ENCODE measurements at regions of chr12 and their contacts with region 1.

Region 1: DNA sequence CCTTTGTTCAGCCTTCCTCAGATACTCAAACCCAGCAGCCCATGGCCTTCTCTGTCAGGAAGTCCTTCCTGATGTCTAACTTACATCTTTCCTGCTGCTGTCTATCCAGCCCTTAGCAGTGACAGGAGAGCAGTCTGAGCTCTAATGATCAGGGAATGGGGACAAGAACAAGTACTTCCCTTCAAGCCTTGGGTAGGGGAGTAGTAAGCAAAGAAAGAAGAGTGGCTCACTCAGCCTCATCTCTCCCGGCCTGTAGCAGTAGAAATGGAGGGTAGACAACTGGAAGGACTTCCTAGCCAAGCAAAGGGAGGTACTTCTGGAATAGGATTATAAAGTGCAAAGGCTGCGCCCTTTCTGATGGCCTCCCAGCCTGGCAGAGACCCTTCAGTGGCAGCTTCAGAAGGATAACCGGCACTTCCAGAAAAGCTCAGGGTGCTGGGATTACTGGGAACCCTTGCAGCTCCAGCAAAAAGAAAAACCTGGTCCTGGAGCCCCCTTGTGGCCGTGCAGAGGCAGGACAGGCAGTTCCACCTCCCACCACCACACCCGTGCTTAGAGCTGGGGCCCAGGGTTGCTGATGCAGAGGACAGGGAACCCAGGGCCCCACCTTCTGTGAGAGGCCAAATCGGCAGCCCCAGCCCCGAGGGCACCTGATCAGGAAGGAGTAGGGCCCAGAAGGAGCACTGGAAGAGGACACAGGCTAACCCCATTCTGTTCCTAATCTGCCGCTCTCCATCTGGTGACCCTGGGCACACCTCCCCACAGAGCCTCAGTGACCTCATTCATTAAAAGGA is 12.4 kb upstream of the SMUG1 start:
- DNase-seq: peak; percentile 52 to 75
- H3K4me3 ChIP-seq: no peak overlapping the region
- H3K27ac ChIP-seq: no peak overlapping the region
- H3K4me1 ChIP-seq: 0 out of 2 replicates have a peak, but pooled peaks cover under 1% of the 10 kb centered on the region
- H3K27me3 ChIP-seq: no peaks in the 10 kb centered on the region
- CTCF ChIP-seq: peak; percentile 93

Region 2: DNA sequence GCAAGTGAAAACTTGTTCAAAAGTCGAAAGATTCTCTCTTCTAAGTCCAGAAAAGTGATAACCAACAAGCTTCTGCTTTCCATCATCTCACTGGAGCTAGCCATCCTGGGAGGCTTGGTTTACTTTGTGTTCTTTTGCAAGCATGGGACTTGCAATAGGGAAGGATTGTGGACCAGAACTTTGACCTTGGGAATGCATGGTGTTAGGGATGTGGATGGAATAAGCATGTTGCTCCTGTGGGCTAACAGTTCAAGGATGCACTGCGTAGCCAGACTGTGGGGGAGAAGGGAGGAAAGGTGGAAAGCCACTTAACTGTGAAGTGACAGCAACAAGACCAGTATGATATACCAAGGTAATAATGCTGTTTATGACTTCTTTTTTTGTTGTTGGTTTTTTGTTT is 1069.4 kb before region 1 on chr12:
- CTCF ChIA-PET with region 1: no interaction called
- POLR2A ChIA-PET with region 1: no interaction called
- intact Hi-C with region 1: no loop called
- DNase-seq: no peak
- H3K4me3 ChIP-seq: no peak overlapping the region
- H3K27ac ChIP-seq: no peak overlapping the region
- H3K4me1 ChIP-seq: no peaks in the 10 kb centered on the region
- H3K27me3 ChIP-seq: no peaks in the 10 kb centered on the region
- CTCF ChIP-seq: no peak

Region 3: DNA sequence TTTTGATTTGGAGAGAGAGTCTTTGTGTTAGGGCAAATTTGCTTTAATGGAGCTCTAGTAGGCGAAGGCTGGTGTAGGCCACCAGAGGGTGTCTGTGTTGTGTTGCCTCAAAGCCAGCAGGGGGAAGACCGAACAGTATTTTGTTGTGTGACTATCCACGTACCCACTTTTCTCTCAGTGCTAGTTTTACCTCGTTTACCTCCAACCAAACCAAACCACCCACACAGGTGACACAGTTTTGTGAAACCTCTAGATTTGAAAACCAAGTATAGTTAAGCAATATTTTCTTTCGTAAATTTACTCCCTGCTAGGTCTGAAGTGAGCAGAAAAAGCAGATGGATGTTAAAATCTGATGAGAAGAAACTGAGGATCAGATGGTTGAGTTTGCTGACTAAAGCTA is 657.7 kb before region 1 on chr12:
- CTCF ChIA-PET with region 1: no interaction called
- POLR2A ChIA-PET with region 1: no interaction called
- intact Hi-C with region 1: loop called (anchors 5 kb)
- DNase-seq: peak in 1 of 2 experiments; percentile 19
- H3K4me3 ChIP-seq: no peak overlapping the region
- H3K27ac ChIP-seq: 0 out of 2 replicates have a peak overlapping the region, but pooled peaks have one; percentile 4
- H3K4me1 ChIP-seq: peaks cover 16% of the 10 kb centered on the region
- H3K27me3 ChIP-seq: no peaks in the 10 kb centered on the region
- CTCF ChIP-seq: peak; percentile 76

Region 4: GRCh38 chr12:54075974-54076373 is 125.2 kb before region 1 on chr12:
- CTCF ChIA-PET with region 1: no interaction called
- POLR2A ChIA-PET with region 1: no interaction called
- intact Hi-C with region 1: no loop called
- DNase-seq: no peak
- H3K4me3 ChIP-seq: no peak overlapping the region
- H3K27ac ChIP-seq: no peak overlapping the region
- H3K4me1 ChIP-seq: no peaks in the 10 kb centered on the region
- H3K27me3 ChIP-seq: peaks cover 14% of the 10 kb centered on the region; the same call in 1 of the 2 replicates
- CTCF ChIP-seq: no peak